ENCODE measurements at regions of chr10 and their contacts with region 1.

Region 1: DNA sequence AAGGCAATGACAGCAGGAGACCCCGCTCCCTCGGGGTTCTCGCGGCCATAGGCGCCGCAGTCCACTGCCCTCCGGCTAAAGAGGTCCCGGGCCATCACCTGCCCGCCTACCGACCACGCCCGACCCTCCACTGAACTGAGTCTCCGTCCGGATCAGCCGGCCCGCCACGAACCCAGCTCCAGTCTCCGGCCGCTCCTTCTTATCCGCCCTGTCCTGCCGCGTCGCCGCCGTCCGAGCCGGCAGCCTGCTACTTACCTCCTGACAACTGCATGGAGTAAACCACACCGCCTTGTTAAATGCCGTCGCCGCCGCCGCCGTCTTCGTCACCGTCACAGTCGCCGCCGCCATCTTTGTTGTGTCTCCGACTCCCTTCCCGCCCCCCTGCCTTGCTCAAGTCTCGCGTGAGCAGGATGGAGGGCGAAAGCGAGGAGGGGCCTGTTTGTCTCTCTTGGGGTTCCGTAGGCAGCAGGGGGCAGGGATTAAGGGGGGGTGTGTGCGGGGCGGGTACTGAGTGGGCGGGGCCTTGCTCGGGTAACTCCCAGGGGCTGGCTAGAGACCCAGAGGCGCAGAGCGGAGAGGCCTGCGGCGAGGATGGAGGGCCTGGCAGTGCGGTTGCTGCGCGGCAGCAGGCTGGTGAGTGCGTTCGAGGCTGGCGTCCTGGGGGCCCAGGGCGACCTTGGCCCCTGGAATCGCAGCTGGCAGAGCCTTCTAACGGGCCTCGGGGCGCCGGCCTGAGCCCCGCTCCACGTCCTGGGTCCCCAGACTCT is at the starts of genes ACADSB and IKZF5:
- DNase-seq: peak; percentile 93 to 99 (median 94)
- ATAC-seq: peak; percentile 86
- H3K4me3 ChIP-seq: peak within 1 kb of the TSS; percentile 91
- H3K4me3 Mint-ChIP-seq: peak within 1 kb of the TSS; percentile 97
- H3K27ac ChIP-seq: peak within 1 kb of the TSS; percentile 94 to 99
- H3K27ac Mint-ChIP-seq: peak within 1 kb of the TSS; percentile 95
- H3K4me1 ChIP-seq: peaks cover 22% of the 10 kb centered on the region
- H3K4me1 Mint-ChIP-seq: peaks cover 68% of the 10 kb centered on the region
- H3K27me3 ChIP-seq: no peaks in the 10 kb centered on the region
- H3K27me3 Mint-ChIP-seq: no peaks in the 10 kb centered on the region
- CTCF ChIP-seq: no peak
- total RNA-seq, gene ACADSB: 16.6 to 17.9 TPM
- total RNA-seq, gene IKZF5: 81.8 to 87.1 TPM

Region 2: DNA sequence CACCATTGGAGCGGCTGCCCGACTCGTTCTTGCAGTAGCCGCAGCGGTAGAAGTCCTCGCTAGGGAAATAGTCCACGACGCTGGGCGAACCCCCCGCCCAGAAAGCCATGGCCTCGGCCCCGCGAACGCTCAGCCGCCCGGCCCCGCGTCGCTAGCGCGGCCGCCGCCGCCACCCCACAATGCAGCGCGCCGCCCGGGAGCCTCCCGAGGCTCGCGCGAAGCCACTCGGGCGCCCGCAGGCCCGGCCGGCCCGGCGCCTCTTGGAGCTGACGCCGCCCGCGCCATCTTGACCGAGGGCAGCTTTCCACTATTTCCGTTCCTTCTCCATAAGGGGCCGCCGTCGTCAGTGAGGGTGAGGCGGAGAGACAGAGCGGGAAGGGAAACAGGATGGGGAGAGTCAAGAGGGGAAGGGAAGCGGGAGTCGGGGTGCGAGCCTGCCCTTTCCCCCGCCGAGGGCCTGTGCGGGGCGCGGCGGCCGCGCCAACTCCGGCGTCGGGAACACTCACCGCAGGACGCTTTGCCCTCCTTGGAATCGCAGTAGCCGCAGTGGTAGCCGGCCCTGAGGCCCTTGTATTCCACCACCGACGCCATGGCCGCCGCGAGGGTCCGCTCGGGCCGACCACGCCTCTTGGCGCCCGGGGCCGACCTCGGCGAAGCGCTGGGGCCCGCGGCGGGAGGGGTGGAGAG is 1080.6 kb before region 1 on chr10 and contains the start of gene ATE1:
- CTCF ChIA-PET with region 1: no interaction called
- POLR2A ChIA-PET with region 1: no interaction called
- intact Hi-C with region 1: loop called in 1 of 2 experiments (anchors 5 kb)
- DNase-seq: peak; percentile 67 to 92 (median 78)
- ATAC-seq: peak; percentile 93
- H3K4me3 ChIP-seq: peak within 1 kb of the TSS; percentile 99
- H3K4me3 Mint-ChIP-seq: peak within 1 kb of the TSS; percentile 96
- H3K27ac ChIP-seq: peak within 1 kb of the TSS; percentile 76 to 85
- H3K27ac Mint-ChIP-seq: peak within 1 kb of the TSS; percentile 92
- H3K4me1 ChIP-seq: peaks cover 11% of the 10 kb centered on the region
- H3K4me1 Mint-ChIP-seq: peaks cover 32% of the 10 kb centered on the region
- H3K27me3 ChIP-seq: no peaks in the 10 kb centered on the region
- H3K27me3 Mint-ChIP-seq: no peaks in the 10 kb centered on the region
- CTCF ChIP-seq: no peak
- total RNA-seq, gene ATE1: 18.5 to 20.9 TPM

Region 3: DNA sequence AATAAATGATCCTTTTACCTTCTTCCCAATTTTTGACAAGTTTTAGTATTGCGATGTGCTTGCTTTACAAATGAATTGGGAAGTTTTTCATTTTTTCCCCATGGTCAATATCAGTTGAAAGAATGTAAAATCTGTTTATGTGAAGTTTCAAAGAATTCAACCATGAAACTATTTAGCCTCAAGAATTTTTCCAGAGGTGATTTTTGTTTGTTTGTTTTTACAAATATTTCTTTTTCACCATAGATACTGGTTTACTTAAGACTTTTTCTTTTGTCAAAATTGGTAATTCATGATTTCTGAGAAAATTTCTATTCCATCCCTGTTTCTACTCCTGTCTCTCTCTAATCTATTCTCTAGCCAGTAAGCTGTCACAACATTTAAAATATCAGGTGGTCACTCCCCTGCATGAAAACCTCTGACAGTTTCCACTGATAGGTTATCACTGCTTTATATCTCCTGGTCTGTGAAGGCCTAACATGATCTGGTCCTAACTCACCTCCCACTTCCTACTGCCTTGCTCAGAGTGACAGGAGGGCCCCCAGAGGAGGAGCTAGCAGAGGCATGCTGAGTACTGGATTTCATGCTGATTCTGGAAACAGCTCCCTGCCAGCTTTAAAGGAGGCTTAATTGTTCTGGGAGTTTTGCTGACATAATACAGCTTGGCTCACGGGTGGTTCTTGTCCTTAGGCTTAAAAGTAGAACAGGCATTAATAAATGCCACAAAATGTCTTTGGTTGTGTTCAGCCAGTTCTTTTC is 561.8 kb before region 1 on chr10:
- CTCF ChIA-PET with region 1: no interaction called
- POLR2A ChIA-PET with region 1: no interaction called
- intact Hi-C with region 1: no loop called
- DNase-seq: no peak
- ATAC-seq: no peak
- H3K4me3 ChIP-seq: no peak overlapping the region
- H3K4me3 Mint-ChIP-seq: no peak overlapping the region
- H3K27ac ChIP-seq: no peak overlapping the region
- H3K27ac Mint-ChIP-seq: no peak overlapping the region
- H3K4me1 ChIP-seq: no peaks in the 10 kb centered on the region
- H3K4me1 Mint-ChIP-seq: no peaks in the 10 kb centered on the region
- H3K27me3 ChIP-seq: peaks cover 0 to 5% of the 10 kb centered on the region in 2 experiments
- H3K27me3 Mint-ChIP-seq: peaks cover 23% of the 10 kb centered on the region
- CTCF ChIP-seq: no peak

Region 4: GRCh38 chr10:122879339-122880273 is 129.0 kb before region 1 on chr10 and contains the start of gene FAM24B:
- CTCF ChIA-PET with region 1: no interaction called
- POLR2A ChIA-PET with region 1: interaction called, 22 read pairs
- intact Hi-C with region 1: loop called (anchors 2 to 5 kb)
- DNase-seq: peak; percentile 87 to 98 (median 94)
- ATAC-seq: peak; percentile 84
- H3K4me3 ChIP-seq: peak within 1 kb of the TSS; percentile 80
- H3K4me3 Mint-ChIP-seq: peak within 1 kb of the TSS; percentile 86
- H3K27ac ChIP-seq: peak within 1 kb of the TSS; percentile 70 to 75
- H3K27ac Mint-ChIP-seq: peak within 1 kb of the TSS; percentile 79
- H3K4me1 ChIP-seq: peaks cover 19% of the 10 kb centered on the region
- H3K4me1 Mint-ChIP-seq: peaks cover 55% of the 10 kb centered on the region
- H3K27me3 ChIP-seq: no peaks in the 10 kb centered on the region
- H3K27me3 Mint-ChIP-seq: no peaks in the 10 kb centered on the region
- CTCF ChIP-seq: no peak
- total RNA-seq, gene FAM24B: 6.8 to 7.1 TPM

Region 5: GRCh38 chr10:122953827-122954730 is 54.5 kb before region 1 on chr10 and contains the start of gene C10orf88:
- CTCF ChIA-PET with region 1: no interaction called
- POLR2A ChIA-PET with region 1: interaction called, 47 read pairs
- intact Hi-C with region 1: loop called (anchors 2 kb)
- DNase-seq: peak; percentile 94 to 100 (median 97)
- ATAC-seq: peak; percentile 93
- H3K4me3 ChIP-seq: peak within 1 kb of the TSS; percentile 84
- H3K4me3 Mint-ChIP-seq: peak within 1 kb of the TSS; percentile 94
- H3K27ac ChIP-seq: no peak within 1 kb of the TSS
- H3K27ac Mint-ChIP-seq: peak within 1 kb of the TSS; percentile 82
- H3K4me1 ChIP-seq: peaks cover 23% of the 10 kb centered on the region
- H3K4me1 Mint-ChIP-seq: peaks cover 40% of the 10 kb centered on the region
- H3K27me3 ChIP-seq: no peaks in the 10 kb centered on the region
- H3K27me3 Mint-ChIP-seq: no peaks in the 10 kb centered on the region
- CTCF ChIP-seq: no peak
- total RNA-seq, gene C10orf88: 2.3 to 2.5 TPM

Region 6: GRCh38 chr10:122968698-122969097 is 39.9 kb before region 1 on chr10:
- CTCF ChIA-PET with region 1: no interaction called
- POLR2A ChIA-PET with region 1: no interaction called
- intact Hi-C with region 1: no loop called
- DNase-seq: no peak
- ATAC-seq: no peak
- H3K4me3 ChIP-seq: no peak overlapping the region
- H3K4me3 Mint-ChIP-seq: no peak overlapping the region
- H3K27ac ChIP-seq: no peak overlapping the region
- H3K27ac Mint-ChIP-seq: no peak overlapping the region
- H3K4me1 ChIP-seq: no peaks in the 10 kb centered on the region
- H3K4me1 Mint-ChIP-seq: no peaks in the 10 kb centered on the region
- H3K27me3 ChIP-seq: peaks cover 0 to 3% of the 10 kb centered on the region in 2 experiments
- H3K27me3 Mint-ChIP-seq: peaks cover 31% of the 10 kb centered on the region
- CTCF ChIP-seq: no peak

Region 7: DNA sequence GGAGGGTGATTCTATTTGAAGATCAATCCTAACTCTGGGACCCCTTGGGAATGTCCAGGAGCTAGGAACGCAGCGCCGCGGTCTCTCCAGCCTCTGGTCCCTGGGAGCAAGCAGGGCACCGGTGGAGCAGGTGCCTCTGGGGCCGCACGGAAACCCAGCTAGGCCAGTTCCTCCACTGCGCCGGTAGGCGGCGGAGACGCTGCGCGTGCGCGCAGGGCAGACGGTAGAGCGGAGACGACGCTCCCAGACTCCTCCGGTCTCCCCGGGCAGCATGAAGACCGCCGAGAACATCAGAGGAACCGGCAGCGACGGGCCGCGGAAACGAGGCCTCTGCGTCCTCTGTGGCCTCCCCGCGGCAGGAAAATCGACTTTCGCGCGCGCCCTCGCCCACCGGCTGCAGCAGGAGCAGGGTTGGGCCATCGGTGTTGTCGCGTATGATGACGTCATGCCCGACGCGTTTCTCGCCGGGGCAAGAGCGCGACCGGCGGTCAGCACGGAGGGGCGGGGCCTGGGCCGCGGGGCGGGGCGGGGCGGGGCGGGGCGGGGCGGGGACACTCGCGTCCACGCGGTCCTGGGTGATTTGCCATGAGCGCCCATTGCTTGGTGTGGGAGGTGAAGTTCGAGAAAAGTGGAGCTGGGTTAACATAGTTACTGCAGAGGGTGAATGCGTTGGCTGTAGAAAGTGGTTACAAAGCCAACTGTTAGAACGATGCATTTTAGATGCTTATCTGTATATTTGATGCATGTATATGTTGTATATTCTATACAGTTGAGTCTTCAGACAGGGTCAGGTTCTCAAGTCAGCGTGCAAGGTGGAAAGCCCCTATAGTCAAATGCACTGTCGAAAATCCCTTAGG is 28.2 kb before region 1 on chr10 and contains the start of gene PSTK:
- CTCF ChIA-PET with region 1: interaction called, 27 read pairs
- POLR2A ChIA-PET with region 1: interaction called, 74 read pairs
- intact Hi-C with region 1: loop called (anchors 1 kb)
- DNase-seq: peak; percentile 70 to 96 (median 82)
- ATAC-seq: peak; percentile 97
- H3K4me3 ChIP-seq: peak within 1 kb of the TSS; percentile 85
- H3K4me3 Mint-ChIP-seq: peak within 1 kb of the TSS; percentile 94
- H3K27ac ChIP-seq: peak within 1 kb of the TSS; percentile 81 to 96
- H3K27ac Mint-ChIP-seq: peak within 1 kb of the TSS; percentile 96
- H3K4me1 ChIP-seq: peaks cover 16% of the 10 kb centered on the region
- H3K4me1 Mint-ChIP-seq: peaks cover 18% of the 10 kb centered on the region
- H3K27me3 ChIP-seq: no peaks in the 10 kb centered on the region
- H3K27me3 Mint-ChIP-seq: no peaks in the 10 kb centered on the region
- CTCF ChIP-seq: peak; percentile 97
- total RNA-seq, gene PSTK: 16.1 to 18.6 TPM

Region 8: DNA sequence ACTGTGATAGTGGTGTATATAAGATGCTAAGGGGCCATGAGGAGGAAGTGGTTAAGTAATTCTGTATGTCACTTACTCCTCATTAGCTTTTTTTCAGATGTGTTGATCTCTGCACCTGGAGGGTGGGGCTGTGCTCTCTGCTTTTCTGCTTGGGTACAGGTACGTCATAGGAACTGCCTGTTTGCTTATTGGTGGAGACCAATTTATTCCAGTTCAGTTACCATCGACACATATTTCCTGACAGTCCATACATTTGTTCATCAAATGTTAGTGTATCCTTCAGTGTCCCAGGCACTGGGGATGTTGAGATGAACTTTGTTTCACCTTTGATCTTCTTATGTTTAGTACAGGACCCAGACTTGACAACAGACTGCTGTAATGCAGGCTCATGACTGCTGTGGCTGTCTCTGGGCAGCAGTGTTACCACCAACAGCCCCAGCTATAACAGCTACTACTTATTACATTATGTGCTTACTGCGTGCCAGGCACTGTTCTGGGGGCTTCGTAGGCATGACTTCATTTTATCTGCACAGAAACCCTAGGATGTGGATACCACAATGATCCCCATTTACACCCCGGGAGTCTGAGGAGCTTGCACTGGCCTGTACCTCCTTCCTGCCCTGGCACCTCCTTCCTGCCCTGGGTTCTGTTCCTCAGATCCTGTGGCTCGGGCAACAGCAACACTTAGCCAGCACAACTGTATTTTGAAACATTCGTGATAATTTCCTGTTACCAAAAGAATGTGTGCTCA is 232.9 kb after region 1 on chr10:
- CTCF ChIA-PET with region 1: no interaction called
- POLR2A ChIA-PET with region 1: interaction called, 13 read pairs
- intact Hi-C with region 1: no loop called
- DNase-seq: peak; percentile 30 to 90 (median 57)
- ATAC-seq: peak; percentile 88
- H3K4me3 ChIP-seq: no peak overlapping the region
- H3K4me3 Mint-ChIP-seq: peak overlapping the region; percentile 67
- H3K27ac ChIP-seq: peak overlapping the region; percentile 75 to 87
- H3K27ac Mint-ChIP-seq: peak overlapping the region; percentile 94
- H3K4me1 ChIP-seq: peaks cover 27% of the 10 kb centered on the region
- H3K4me1 Mint-ChIP-seq: peaks cover 36% of the 10 kb centered on the region
- H3K27me3 ChIP-seq: no peaks in the 10 kb centered on the region
- H3K27me3 Mint-ChIP-seq: no peaks in the 10 kb centered on the region
- CTCF ChIP-seq: no peak

Measured in CD4-positive, alpha-beta T cell (primary cell).